Naive thymus-derived CD4-positive, alpha-beta T cell (primary cell): ENCODE measurements at regions of chr22 and their contacts with region 1.

Region 1: GRCh38 chr22:19122143-19122751 is at the start of gene DGCR2:
- DNase-seq: peak; percentile 92 to 96 (median 94)
- ATAC-seq: peak; percentile 99
- H3K4me3 ChIP-seq: peak within 1 kb of the TSS; percentile 90
- H3K4me3 Mint-ChIP-seq: peak within 1 kb of the TSS; percentile 90 to 94 (median 93)
- H3K27ac ChIP-seq: peak within 1 kb of the TSS; percentile 91
- H3K27ac Mint-ChIP-seq: peak within 1 kb of the TSS; percentile 69 to 97 (median 87)
- H3K4me1 ChIP-seq: peaks cover 34 to 42% of the 10 kb centered on the region in 2 donors
- H3K4me1 Mint-ChIP-seq: peaks cover 36 to 53% (median 50%) of the 10 kb centered on the region in 7 donors
- H3K27me3 ChIP-seq: no peaks in the 10 kb centered on the region
- H3K27me3 Mint-ChIP-seq: peaks cover 0 to 2% (median 0%) of the 10 kb centered on the region in 5 donors
- total RNA-seq, gene DGCR2: 38.8 to 79.1 (median 50.4) TPM

Region 2: GRCh38 chr22:19143967-19144400 is 21.7 kb after region 1 on chr22:
- CTCF ChIA-PET with region 1: interaction called, 4 read pairs
- POLR2A ChIA-PET with region 1: interaction called, 13 read pairs
- intact Hi-C with region 1: loop called (anchors 1 kb)
- DNase-seq: peak in 6 of 9 donors; percentile 8 to 40 (median 26)
- ATAC-seq: no peak
- H3K4me3 ChIP-seq: peak overlapping the region; percentile 83
- H3K4me3 Mint-ChIP-seq: peak overlapping the region; percentile 84 to 99 (median 98)
- H3K27ac ChIP-seq: peak overlapping the region; percentile 93
- H3K27ac Mint-ChIP-seq: peak overlapping the region; percentile 91 to 99 (median 97)
- H3K4me1 ChIP-seq: no peaks in the 10 kb centered on the region
- H3K4me1 Mint-ChIP-seq: peaks cover 8 to 32% (median 18%) of the 10 kb centered on the region in 7 donors
- H3K27me3 ChIP-seq: peaks cover 0 to 1% of the 10 kb centered on the region in 2 donors
- H3K27me3 Mint-ChIP-seq: peaks cover 9 to 33% (median 11%) of the 10 kb centered on the region in 5 donors

Region 3: DNA sequence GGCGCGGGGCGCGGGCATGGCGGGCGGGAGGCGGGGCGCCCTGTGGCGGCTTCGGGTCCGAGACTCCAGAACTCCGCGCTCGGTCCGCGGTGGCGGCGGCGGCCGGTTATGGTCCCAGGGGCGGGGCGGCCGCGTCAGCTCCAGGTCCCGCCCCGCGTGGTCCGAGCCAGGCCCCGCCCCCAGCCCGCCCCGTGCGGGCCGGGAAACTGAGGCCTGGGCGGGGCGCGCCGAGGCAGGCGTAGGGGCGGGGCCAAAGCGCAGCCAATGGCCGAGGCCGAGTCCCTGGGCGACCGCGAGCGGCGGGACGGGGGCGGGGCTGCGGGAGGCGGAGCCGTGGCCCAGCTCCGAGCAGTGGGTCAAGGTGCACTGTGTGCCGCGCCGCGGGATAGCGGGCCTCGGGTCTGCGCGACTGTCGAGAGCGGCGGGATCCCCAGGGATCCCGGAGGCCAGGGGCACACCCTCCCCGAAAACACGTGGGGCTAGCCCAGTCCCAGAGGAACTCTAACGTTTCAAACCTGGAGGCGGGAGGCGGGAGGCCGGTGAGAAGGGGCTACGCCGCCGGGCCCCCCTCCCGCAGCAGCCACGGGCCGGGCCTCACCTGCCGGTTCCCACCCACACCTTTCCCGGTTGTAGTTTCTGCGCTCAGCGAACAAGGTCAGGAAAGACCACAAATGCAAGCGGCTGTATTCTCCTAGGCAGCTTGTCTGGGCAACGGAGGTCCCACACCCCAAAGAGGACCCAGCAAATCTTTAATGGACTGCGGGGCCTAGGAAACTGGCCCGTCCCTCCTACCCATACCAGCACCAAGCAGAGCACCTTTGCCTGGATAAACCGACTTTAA is 56.6 kb after region 1 on chr22 and contains the start of gene SLC25A1:
- CTCF ChIA-PET with region 1: no interaction called
- POLR2A ChIA-PET with region 1: interaction called, 3 read pairs
- intact Hi-C with region 1: loop called (anchors 1 kb)
- DNase-seq: peak in 8 of 9 donors; percentile 42 to 96 (median 49)
- ATAC-seq: peak; percentile 82
- H3K4me3 ChIP-seq: peak within 1 kb of the TSS; percentile 58
- H3K4me3 Mint-ChIP-seq: peak within 1 kb of the TSS; percentile 83 to 92 (median 86)
- H3K27ac ChIP-seq: peak within 1 kb of the TSS; percentile 63
- H3K27ac Mint-ChIP-seq: peak within 1 kb of the TSS; percentile 31 to 92 (median 85)
- H3K4me1 ChIP-seq: peaks cover 7 to 9% of the 10 kb centered on the region in 2 donors
- H3K4me1 Mint-ChIP-seq: peaks cover 13 to 28% (median 23%) of the 10 kb centered on the region in 7 donors
- H3K27me3 ChIP-seq: no peaks in the 10 kb centered on the region
- H3K27me3 Mint-ChIP-seq: no peaks in the 10 kb centered on the region
- total RNA-seq, gene SLC25A1: 19.3 to 34.0 (median 30.7) TPM

Region 4: GRCh38 chr22:19291580-19292457 is 169.6 kb after region 1 on chr22 and contains the start of gene CLTCL1:
- CTCF ChIA-PET with region 1: no interaction called
- POLR2A ChIA-PET with region 1: interaction called, 4 read pairs
- intact Hi-C with region 1: loop called (anchors 1 kb)
- DNase-seq: peak; percentile 38 to 81 (median 67)
- ATAC-seq: peak; percentile 90
- H3K4me3 ChIP-seq: peak within 1 kb of the TSS; percentile 82
- H3K4me3 Mint-ChIP-seq: peak within 1 kb of the TSS; percentile 76 to 93 (median 92)
- H3K27ac ChIP-seq: peak within 1 kb of the TSS; percentile 76
- H3K27ac Mint-ChIP-seq: peak within 1 kb of the TSS; percentile 64 to 93 (median 85)
- H3K4me1 ChIP-seq: peaks cover 6 to 8% of the 10 kb centered on the region in 2 donors
- H3K4me1 Mint-ChIP-seq: peaks cover 13 to 33% (median 25%) of the 10 kb centered on the region in 7 donors
- H3K27me3 ChIP-seq: no peaks in the 10 kb centered on the region
- H3K27me3 Mint-ChIP-seq: peaks cover 5 to 55% (median 23%) of the 10 kb centered on the region in 5 donors
- total RNA-seq, gene CLTCL1: 0.22 to 3.1 (median 1.4) TPM

Region 5: DNA sequence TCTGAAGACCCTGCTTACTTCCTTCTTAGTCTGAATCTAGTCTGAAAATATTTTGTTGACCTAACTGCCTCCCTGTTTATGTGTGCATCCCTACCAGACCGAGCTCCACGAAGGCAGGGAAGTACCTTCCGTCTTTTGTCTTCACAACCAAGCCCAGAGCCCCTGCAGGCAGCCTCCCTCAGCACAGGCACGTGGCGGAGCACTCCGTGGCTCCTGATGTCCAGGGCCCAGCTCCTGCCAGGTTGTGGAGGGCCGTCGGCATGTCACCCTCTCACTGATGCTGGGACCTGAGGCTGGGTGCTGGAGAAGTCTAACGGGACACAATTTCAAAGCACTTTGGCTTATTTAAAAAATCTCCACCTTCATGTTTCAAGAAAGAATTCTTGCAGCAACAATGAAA is 228.7 kb after region 1 on chr22:
- CTCF ChIA-PET with region 1: no interaction called
- POLR2A ChIA-PET with region 1: no interaction called
- intact Hi-C with region 1: no loop called
- DNase-seq: no peak
- ATAC-seq: no peak
- H3K4me3 ChIP-seq: no peak overlapping the region
- H3K4me3 Mint-ChIP-seq: no peak overlapping the region
- H3K27ac ChIP-seq: no peak overlapping the region
- H3K27ac Mint-ChIP-seq: peak overlapping the region in 3 of 9 donors; percentile 9 to 60 (median 26)
- H3K4me1 ChIP-seq: no peaks in the 10 kb centered on the region
- H3K4me1 Mint-ChIP-seq: peaks cover 0 to 7% (median 0%) of the 10 kb centered on the region in 7 donors
- H3K27me3 ChIP-seq: no peaks in the 10 kb centered on the region
- H3K27me3 Mint-ChIP-seq: no peaks in the 10 kb centered on the region

Region 6: DNA sequence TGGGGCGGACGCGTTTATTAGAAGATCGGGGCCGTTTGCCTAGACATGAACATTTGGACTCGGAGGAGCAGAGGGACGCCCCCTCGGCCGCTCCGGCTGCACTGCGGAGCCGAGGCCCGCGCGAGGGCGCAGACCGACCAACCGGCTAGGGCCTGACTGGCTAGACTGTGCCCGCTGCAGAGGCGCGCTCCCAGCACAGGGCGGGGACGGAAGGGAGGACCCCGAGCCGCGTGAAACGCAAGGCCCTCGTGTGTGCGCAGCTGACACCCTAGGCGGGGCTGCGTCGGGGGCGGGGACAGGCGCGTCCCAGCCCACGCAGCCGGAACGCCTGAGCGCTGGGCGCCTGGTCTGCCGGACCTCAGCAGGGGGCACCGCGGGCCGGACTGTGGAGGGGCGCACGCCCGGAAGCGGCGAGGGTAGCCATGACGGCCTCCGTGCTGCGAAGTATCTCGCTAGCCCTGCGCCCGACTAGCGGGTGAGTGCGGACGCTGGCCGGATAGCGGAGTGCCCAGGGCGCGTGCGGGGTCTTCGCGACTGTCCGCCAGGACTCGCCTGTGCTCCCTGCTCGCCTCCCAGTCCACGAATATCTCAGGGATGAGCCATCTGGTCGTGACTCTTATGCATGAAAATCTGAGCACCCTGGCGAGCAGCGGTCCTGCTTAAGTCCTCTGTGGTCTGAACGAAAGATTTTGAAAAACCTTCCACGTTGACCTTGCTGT is 310.0 kb after region 1 on chr22 and contains the start of gene MRPL40:
- CTCF ChIA-PET with region 1: no interaction called
- POLR2A ChIA-PET with region 1: interaction called, 5 read pairs
- intact Hi-C with region 1: loop called (anchors 1 kb)
- DNase-seq: peak; percentile 70 to 92 (median 84)
- ATAC-seq: peak; percentile 90
- H3K4me3 ChIP-seq: peak within 1 kb of the TSS; percentile 97
- H3K4me3 Mint-ChIP-seq: peak within 1 kb of the TSS; percentile 82 to 94 (median 91)
- H3K27ac ChIP-seq: peak within 1 kb of the TSS; percentile 80
- H3K27ac Mint-ChIP-seq: peak within 1 kb of the TSS; percentile 80 to 97 (median 91)
- H3K4me1 ChIP-seq: peaks cover 16 to 23% of the 10 kb centered on the region in 2 donors
- H3K4me1 Mint-ChIP-seq: peaks cover 27 to 50% (median 40%) of the 10 kb centered on the region in 7 donors
- H3K27me3 ChIP-seq: no peaks in the 10 kb centered on the region
- H3K27me3 Mint-ChIP-seq: no peaks in the 10 kb centered on the region
- total RNA-seq, gene MRPL40: 11.5 to 21.2 (median 17.0) TPM

Region 7: GRCh38 chr22:19447388-19448075 is 325.3 kb after region 1 on chr22 and contains the start of gene C22orf39:
- CTCF ChIA-PET with region 1: no interaction called
- POLR2A ChIA-PET with region 1: no interaction called
- intact Hi-C with region 1: loop called (anchors 1 to 5 kb)
- DNase-seq: peak; percentile 69 to 93 (median 90)
- ATAC-seq: peak; percentile 94
- H3K4me3 ChIP-seq: peak within 1 kb of the TSS; percentile 65
- H3K4me3 Mint-ChIP-seq: peak within 1 kb of the TSS; percentile 84 to 99 (median 92)
- H3K27ac ChIP-seq: peak within 1 kb of the TSS; percentile 81
- H3K27ac Mint-ChIP-seq: peak within 1 kb of the TSS; percentile 84 to 97 (median 94)
- H3K4me1 ChIP-seq: peaks cover 18 to 26% of the 10 kb centered on the region in 2 donors
- H3K4me1 Mint-ChIP-seq: peaks cover 21 to 61% (median 48%) of the 10 kb centered on the region in 7 donors
- H3K27me3 ChIP-seq: no peaks in the 10 kb centered on the region
- H3K27me3 Mint-ChIP-seq: no peaks in the 10 kb centered on the region
- total RNA-seq, gene C22orf39: 34.2 to 44.9 (median 36.8) TPM

Region 8: DNA sequence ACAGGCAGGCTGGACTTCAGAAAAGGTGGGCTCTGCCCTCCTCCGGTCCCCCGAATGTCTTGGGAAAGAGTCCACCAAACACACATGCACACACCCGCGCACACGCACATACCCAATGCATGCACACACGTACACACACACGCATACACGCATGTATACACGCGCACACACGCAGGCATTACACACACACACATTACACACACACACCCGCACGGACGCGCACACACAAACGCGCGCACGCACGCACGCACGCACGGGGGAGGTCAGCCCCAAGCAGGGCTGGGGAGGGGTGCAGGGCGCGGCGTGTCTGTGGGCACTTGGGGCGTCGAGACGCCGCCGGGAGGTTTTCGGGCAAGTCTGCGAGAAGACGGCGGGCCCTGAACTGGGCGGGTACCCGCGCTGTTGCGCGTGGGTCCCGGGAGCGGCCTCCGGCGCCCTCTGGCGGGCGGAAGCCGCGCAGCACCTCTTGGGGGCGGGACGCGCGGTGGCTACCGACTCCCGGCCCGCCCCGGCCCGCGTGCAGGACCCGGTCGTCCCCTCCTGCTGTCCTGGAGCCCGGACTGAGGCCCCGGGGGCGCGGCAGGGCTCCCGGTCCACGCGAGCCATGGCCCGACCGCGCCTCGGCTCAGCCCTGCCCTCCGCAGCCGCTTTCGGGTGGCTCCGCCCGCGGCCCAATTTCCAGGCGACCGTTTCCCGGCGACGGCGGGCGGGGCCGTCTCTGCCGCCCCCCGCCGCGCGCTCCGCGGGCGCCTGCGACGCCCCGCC is 595.6 kb after region 1 on chr22:
- CTCF ChIA-PET with region 1: no interaction called
- POLR2A ChIA-PET with region 1: no interaction called
- intact Hi-C with region 1: loop called in 1 of 2 experiments (anchors 1 kb)
- DNase-seq: peak; percentile 68 to 93 (median 86)
- ATAC-seq: peak; percentile 97
- H3K4me3 ChIP-seq: peak overlapping the region; percentile 41
- H3K4me3 Mint-ChIP-seq: peak overlapping the region; percentile 72 to 88 (median 82)
- H3K27ac ChIP-seq: no peak overlapping the region
- H3K27ac Mint-ChIP-seq: peak overlapping the region in 3 of 9 donors; percentile 5 to 14 (median 9)
- H3K4me1 ChIP-seq: peaks cover 0 to 10% of the 10 kb centered on the region in 2 donors
- H3K4me1 Mint-ChIP-seq: peaks cover 0 to 10% (median 8%) of the 10 kb centered on the region in 7 donors
- H3K27me3 ChIP-seq: peaks cover 0 to 3% of the 10 kb centered on the region in 2 donors
- H3K27me3 Mint-ChIP-seq: peaks cover 28 to 59% (median 35%) of the 10 kb centered on the region in 5 donors